ENCODE measurements at regions of chr1 and their contacts with region 1.

Region 1: DNA sequence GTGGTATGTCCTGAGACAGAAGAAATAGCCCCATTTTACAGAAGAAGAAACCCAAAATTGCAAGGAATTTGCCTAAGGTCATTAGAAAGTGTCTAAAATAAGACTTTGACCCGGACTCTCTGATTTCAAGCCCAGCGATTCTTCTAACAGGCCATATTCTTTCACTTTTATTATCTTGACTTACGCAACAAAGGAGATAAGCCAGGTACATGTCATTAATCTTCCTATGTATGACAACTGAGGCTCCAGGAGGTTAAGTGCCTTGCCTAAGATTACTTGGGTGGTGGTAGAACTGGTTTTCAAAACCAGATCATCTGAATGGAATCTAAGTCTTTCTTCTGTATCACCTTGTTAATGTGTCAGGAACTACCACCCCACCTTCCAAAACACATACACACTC is 124.3 kb downstream of the PBX1 start:
- DNase-seq: peak; percentile 55 to 98
- H3K4me3 ChIP-seq: peak overlapping the region; percentile 26; the same call in 1 of the 2 replicates
- H3K27ac ChIP-seq: peak overlapping the region; percentile 97
- H3K4me1 ChIP-seq: peaks cover 55% of the 10 kb centered on the region
- H3K27me3 ChIP-seq: no peaks in the 10 kb centered on the region
- CTCF ChIP-seq: no peak

Region 2: DNA sequence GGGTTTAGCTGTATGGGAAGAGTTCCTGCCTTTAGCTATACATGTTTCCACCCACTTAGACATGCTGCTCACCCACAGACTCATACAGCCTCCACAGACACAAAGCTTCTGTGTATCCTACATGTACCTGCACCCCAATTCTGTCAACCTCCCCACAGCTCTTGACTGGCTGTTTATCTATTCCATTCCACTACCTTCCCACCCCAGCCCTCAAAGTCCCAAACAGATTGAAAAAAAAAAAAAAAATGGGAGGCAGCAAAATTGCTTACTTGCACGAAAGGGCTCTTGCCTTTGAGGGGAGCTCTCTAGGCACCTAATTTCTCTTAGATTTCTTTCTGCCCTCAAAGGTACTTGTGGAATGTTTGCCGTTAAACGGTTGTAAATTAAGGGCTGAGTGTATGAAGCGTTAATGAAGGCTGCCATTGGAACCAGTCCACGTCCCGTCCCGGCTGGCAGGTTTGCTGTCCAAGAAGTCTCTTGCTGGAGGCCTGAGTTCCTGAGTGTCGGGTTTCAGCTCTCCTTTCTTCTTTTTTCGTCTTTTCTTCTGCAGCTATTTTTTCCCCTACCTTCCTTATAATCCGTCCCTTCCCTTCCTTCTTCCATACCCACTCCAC is 80.6 kb before region 1 on chr1:
- CTCF ChIA-PET with region 1: no interaction called
- POLR2A ChIA-PET with region 1: no interaction called
- intact Hi-C with region 1: loop called (anchors 2 kb)
- DNase-seq: peak; percentile 65 to 83
- H3K4me3 ChIP-seq: peak overlapping the region; percentile 49
- H3K27ac ChIP-seq: peak overlapping the region; percentile 95
- H3K4me1 ChIP-seq: peaks cover 69% of the 10 kb centered on the region
- H3K27me3 ChIP-seq: no peaks in the 10 kb centered on the region
- CTCF ChIP-seq: no peak

Region 3: DNA sequence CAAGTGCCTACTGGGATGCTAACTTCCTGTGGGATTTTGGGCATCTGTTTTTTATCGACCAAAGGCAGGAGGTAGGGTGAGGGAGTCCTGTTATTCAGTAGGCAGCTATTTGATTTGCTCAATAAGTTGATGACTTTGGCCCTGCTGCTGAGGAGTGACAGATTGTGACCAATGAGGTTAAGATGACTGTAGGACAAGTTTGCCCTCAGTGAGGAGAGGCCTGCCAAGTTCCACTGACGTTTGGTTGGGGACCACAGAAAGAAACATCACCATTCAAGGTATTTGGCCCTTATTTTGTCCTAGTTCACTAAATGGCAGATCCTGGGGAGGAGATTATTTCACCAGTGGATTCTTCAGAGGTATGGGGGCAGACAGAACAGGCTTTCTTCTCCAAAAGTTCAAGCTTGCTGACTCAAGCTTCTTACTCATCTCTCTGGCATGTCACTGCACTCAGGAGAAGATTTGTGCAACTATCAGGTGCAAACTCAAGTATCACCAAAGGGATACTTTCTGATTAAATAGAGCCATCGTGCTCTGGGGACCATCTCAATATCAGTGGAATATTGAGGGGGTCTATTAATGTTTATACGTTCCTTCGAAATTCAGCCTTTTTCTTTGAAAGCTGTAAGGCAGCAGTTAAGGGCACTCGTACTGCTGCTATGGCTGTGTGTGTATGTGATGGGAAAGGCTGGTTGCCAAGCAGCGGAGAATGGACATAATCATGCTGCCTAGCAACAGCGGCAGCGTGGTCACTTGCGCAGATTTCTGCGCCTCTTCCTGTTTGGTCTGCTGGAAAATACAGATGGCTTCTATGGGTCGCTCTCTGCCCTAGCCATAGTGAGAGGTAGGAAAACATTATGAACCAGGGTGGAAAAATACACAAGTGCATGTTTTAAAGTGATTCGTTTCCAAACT is 45.5 kb before region 1 on chr1:
- CTCF ChIA-PET with region 1: no interaction called
- POLR2A ChIA-PET with region 1: no interaction called
- intact Hi-C with region 1: loop called (anchors 5 kb)
- DNase-seq: peak; percentile 73 to 92
- H3K4me3 ChIP-seq: no peak overlapping the region
- H3K27ac ChIP-seq: peak overlapping the region; percentile 86
- H3K4me1 ChIP-seq: peaks cover 61% of the 10 kb centered on the region
- H3K27me3 ChIP-seq: no peaks in the 10 kb centered on the region
- CTCF ChIP-seq: no peak

Region 4: DNA sequence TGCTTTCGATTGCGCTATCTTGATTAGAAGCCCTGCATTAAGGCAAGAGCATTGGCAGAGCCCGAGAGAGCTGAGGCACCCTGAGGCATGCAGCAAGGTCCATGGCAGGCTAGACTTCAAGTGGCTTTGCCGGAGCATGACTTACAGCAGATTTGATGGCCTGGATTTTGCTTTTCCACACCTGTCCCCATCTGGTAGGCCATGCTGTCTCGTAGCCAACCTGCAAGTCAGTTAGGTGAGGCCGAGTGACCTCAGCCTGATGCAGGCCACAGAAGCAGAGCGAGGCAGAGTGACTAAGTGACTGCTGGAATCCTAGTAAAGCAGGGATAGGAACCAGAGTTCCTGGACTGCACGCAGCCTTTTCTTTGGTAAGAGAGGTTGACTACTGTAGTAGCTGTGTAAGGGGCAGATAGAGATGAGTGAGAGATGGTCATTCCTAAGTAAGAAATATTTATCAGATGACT is 24.7 kb after region 1 on chr1:
- CTCF ChIA-PET with region 1: no interaction called
- POLR2A ChIA-PET with region 1: no interaction called
- intact Hi-C with region 1: loop called (anchors 1 kb)
- DNase-seq: peak; percentile 48 to 50
- H3K4me3 ChIP-seq: no peak overlapping the region
- H3K27ac ChIP-seq: peak overlapping the region; percentile 83
- H3K4me1 ChIP-seq: peaks cover 33% of the 10 kb centered on the region
- H3K27me3 ChIP-seq: no peaks in the 10 kb centered on the region
- CTCF ChIP-seq: no peak

Region 5: DNA sequence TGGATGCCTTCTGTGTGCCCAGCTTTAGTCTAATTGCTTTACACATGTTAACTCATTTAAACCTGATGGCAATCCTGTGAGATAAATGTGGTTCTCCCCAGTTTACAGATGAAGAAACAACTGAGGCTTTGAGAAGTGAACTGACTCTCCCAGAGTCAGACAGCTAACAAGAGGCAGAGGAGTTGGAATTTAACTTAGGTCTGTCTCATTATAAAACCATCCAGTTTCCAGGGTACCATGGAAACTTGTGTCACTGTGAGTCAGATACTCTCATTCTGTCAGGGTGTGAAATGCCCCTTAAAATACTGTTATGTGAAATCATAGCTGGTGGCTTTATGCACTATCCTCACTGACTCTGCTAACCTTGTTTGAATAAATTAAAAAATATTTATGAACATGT is 82.3 kb after region 1 on chr1:
- CTCF ChIA-PET with region 1: no interaction called
- POLR2A ChIA-PET with region 1: no interaction called
- intact Hi-C with region 1: loop called (anchors 1 kb)
- DNase-seq: peak in 1 of 2 experiments; percentile 79
- H3K4me3 ChIP-seq: no peak overlapping the region
- H3K27ac ChIP-seq: peak overlapping the region; percentile 96
- H3K4me1 ChIP-seq: peaks cover 62% of the 10 kb centered on the region
- H3K27me3 ChIP-seq: no peaks in the 10 kb centered on the region
- CTCF ChIP-seq: no peak

Region 6: GRCh38 chr1:164786980-164787833 is 104.0 kb after region 1 on chr1:
- CTCF ChIA-PET with region 1: no interaction called
- POLR2A ChIA-PET with region 1: no interaction called
- intact Hi-C with region 1: loop called (anchors 1 kb)
- DNase-seq: peak; percentile 66 to 78
- H3K4me3 ChIP-seq: no peak overlapping the region
- H3K27ac ChIP-seq: peak overlapping the region; percentile 54
- H3K4me1 ChIP-seq: peaks cover 22% of the 10 kb centered on the region
- H3K27me3 ChIP-seq: no peaks in the 10 kb centered on the region
- CTCF ChIP-seq: peak; percentile 95

Region 7: GRCh38 chr1:165424454-165425216 is 741.4 kb after region 1 on chr1:
- CTCF ChIA-PET with region 1: no interaction called
- POLR2A ChIA-PET with region 1: no interaction called
- intact Hi-C with region 1: no loop called
- DNase-seq: no peak
- H3K4me3 ChIP-seq: no peak overlapping the region
- H3K27ac ChIP-seq: no peak overlapping the region
- H3K4me1 ChIP-seq: no peaks in the 10 kb centered on the region
- H3K27me3 ChIP-seq: peaks cover 12% of the 10 kb centered on the region; the same call in 1 of the 2 replicates
- CTCF ChIP-seq: no peak

Measured in PC-9 (cell line).